ENCODE measurements at regions of chr10 and their contacts with region 1.

Region 1: DNA sequence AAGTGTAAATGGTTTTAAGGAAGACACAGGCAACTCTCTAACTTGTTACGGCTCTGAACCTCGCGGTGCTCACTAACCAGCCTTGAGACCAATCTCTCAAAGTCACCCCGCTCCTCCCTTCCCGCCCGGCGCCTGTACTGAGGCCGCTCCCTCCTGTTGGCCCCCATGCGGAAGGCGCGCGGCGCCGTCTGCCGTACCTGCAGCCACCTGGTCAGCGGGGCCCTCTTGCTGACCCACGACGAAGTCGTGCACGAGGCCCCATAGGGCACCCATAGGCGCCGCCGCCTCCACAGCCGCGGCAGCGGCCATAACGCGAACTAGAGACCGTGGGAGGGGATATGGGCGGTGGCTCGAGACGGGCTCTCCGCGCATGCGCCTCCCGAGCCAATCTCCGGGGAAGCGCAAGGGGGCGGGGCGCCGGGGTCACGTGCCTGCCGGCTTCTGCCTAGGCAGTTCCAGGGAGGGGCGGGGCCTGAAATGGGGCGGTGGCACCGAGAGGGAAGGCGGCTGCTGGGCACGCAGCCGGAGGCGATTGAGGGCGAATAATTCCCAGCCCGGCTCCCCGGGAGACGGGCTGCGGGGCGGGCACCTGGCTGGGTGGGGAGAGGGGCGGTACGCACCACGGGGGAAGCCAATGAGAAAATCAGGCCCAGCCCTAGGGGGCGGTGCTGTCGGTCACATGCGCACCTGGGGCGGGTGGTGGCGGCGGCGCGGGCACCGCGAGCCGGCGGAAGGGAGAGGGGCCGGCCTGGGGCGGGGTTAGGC is at the start of gene MMS19:
- DNase-seq: peak; percentile 99 to 100 (median 100)
- ATAC-seq: peak; percentile 90 to 96 (median 92)
- H3K4me3 ChIP-seq: peak within 1 kb of the TSS; percentile 71 to 99 (median 96)
- H3K27ac ChIP-seq: peak within 1 kb of the TSS; percentile 71 to 98 (median 94)
- H3K4me1 ChIP-seq: peaks cover 7 to 77% (median 47%) of the 10 kb centered on the region in 12 donors
- H3K27me3 ChIP-seq: no peaks in the 10 kb centered on the region
- CTCF ChIP-seq: peak in 5 of 12 donors; percentile 14 to 56 (median 21)
- POLR2A ChIP-seq: peak in 1 of 2 donors; percentile 68
- total RNA-seq, gene MMS19: 30.2 to 63.5 (median 48.1) TPM

Region 2: DNA sequence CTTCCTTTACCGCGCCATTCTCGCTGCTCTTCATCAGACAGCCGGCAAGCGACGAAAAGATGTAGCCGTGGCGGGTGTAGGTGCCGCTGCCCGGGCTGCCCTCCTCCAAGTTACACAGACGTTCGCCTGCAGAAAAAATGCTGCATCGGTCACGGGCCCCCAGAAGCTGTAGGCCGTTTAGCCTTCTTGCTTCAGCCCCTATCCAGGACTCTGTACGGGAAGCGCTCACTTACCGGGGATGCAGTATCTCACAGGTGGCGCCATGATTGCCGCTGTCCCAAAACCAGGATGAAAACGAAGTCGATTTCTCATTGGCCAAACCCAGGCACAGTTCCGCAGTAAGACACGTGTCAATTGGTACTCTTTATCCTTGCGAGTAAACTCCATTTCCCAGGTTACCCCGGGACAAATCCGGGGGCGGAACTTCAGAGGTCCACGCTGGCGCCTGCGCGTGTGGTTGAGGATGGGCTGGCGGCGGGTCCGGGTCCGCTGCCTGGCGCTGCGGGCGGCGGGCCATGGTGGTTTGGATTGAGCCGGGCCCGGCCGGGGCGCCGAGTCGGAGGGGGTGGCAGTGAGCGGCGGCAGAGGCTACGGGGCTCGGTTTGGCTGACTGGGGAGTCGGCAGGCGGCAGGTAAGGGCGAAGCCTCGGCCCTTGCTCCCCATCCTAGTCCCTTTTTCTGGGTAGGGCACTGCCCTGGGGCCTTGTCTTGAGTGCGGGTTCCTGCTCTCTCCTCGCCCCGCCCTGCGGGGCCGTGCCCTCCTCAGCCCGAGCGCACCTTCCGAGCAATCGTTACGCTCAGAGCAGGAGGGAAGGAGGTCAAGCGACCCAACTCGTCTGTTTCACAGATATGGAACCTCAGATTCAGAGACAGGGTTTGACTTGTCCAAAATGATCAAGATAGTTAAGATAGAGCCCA is 52.3 kb before region 1 on chr10 and contains the starts of genes EXOSC1 and ZDHHC16:
- intact Hi-C with region 1: loop called in 2 of 10 experiments (anchors 5 to 10 kb)
- DNase-seq: peak; percentile 92 to 94 (median 93)
- ATAC-seq: peak; percentile 97 to 98 (median 98)
- H3K4me3 ChIP-seq: peak within 1 kb of the TSS; percentile 62 to 96 (median 89)
- H3K27ac ChIP-seq: peak within 1 kb of the TSS; percentile 27 to 83 (median 72)
- H3K4me1 ChIP-seq: peaks cover 4 to 46% (median 35%) of the 10 kb centered on the region in 12 donors
- H3K27me3 ChIP-seq: no peaks in the 10 kb centered on the region
- CTCF ChIP-seq: peak in 4 of 12 donors; percentile 9 to 39 (median 24)
- POLR2A ChIP-seq: peak in 1 of 2 donors; percentile 81
- total RNA-seq, gene EXOSC1: 14.8 to 24.6 (median 16.9) TPM
- total RNA-seq, gene ZDHHC16: 16.2 to 36.8 (median 25.2) TPM

Region 3: GRCh38 chr10:97534746-97535367 is 36.6 kb after region 1 on chr10:
- intact Hi-C with region 1: loop called in 3 of 10 experiments (anchors 5 to 10 kb)
- DNase-seq: peak in 1 of 5 donors; percentile 22
- ATAC-seq: peak in 3 of 4 donors; percentile 30 to 45 (median 31)
- H3K4me3 ChIP-seq: no peak overlapping the region
- H3K27ac ChIP-seq: no peak overlapping the region
- H3K4me1 ChIP-seq: peaks cover 0 to 16% (median 8%) of the 10 kb centered on the region in 12 donors
- H3K27me3 ChIP-seq: no peaks in the 10 kb centered on the region
- CTCF ChIP-seq: peak in 9 of 12 donors; percentile 11 to 56 (median 48)
- POLR2A ChIP-seq: no peak

Region 4: DNA sequence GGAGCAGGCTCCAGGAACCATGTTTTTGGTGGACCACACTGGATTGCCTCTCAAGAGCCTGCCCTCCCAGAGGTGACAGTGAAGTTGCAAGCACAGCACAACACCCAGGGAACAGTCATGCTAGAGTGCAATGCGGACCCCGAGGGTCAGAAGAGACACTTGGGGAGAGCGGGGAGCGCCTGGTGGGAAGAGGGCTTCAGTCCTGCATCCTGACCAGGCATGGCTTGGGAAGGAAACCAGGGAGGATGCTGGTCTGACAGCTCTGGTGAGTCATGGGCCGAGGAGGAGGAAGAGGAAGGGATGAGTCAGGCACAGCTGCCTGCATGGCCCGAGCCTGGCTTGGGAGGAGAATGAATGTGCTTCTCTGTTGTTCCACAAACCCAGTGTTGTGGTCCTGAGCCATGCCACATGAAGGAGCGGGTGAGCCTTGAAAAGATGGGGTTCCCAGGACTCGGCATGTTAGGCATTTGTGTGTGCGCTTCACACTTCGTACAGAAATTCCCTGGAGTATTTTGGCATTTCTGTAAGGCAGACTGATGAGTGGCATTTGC is 44.8 kb after region 1 on chr10:
- intact Hi-C with region 1: loop called in 4 of 10 experiments (anchors 1 to 10 kb)
- DNase-seq: peak; percentile 83 to 94 (median 88)
- ATAC-seq: peak; percentile 78 to 92 (median 88)
- H3K4me3 ChIP-seq: no peak overlapping the region
- H3K27ac ChIP-seq: peak overlapping the region; percentile 77 to 97 (median 88)
- H3K4me1 ChIP-seq: peaks cover 0 to 75% (median 57%) of the 10 kb centered on the region in 12 donors
- H3K27me3 ChIP-seq: no peaks in the 10 kb centered on the region
- CTCF ChIP-seq: no peak
- POLR2A ChIP-seq: peak in 1 of 2 donors; percentile 31

Region 5: GRCh38 chr10:97553575-97554031 is 55.3 kb after region 1 on chr10:
- intact Hi-C with region 1: loop called in 6 of 10 experiments (anchors 5 to 10 kb)
- DNase-seq: peak; percentile 69 to 79 (median 72)
- ATAC-seq: peak; percentile 87 to 91 (median 91)
- H3K4me3 ChIP-seq: no peak overlapping the region
- H3K27ac ChIP-seq: no peak overlapping the region
- H3K4me1 ChIP-seq: peaks cover 0 to 42% (median 26%) of the 10 kb centered on the region in 12 donors
- H3K27me3 ChIP-seq: no peaks in the 10 kb centered on the region
- CTCF ChIP-seq: peak; percentile 61 to 89 (median 80)
- POLR2A ChIP-seq: no peak

Region 6: DNA sequence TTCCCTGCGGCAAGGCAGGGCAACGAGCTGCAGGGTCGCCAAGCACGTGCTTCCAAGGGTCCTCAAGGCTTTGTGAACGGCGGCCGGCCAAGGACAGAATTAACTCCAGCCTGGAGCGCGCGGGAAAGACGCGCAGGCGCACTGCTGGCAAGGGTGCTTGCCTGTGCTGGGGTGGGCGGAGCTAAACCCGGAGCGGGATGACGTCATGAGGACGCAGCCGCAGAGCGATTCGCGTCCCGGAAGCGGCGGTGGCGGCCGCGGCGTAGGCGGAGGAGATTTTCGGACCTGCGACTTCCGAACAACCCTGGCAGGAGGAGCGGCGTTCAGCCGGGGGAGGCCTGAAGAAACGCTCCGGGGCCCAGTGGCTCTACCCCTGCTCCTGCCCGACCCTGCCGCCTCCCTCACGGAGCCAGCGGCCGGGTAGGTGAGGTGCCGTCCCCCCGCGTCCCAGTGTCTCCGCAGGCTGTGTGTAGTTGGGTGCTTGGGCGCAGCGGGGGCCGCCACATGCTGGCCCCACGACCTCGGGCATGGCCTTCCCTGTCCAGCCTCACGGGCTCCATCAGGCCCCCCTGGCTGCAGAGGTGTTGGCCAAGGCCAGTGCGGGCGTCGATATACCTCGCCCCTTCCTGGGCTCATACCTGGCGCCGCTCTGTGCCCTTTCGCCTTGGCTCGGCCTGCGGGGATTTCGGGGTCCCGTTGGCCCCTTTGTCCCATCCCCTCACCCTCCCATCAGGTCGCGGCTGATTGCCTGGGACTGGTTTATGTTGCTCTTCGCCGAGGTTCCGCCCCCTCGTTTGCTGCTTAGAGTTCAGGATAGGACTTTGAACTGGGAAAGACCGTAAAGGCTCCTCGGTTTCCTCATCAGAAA is 238.9 kb after region 1 on chr10 and contains the start of gene ZFYVE27:
- intact Hi-C with region 1: loop called in 1 of 10 experiments (anchors 5 kb)
- DNase-seq: peak; percentile 97 to 99 (median 98)
- ATAC-seq: peak; percentile 96 to 98 (median 96)
- H3K4me3 ChIP-seq: peak within 1 kb of the TSS; percentile 75 to 100 (median 90)
- H3K27ac ChIP-seq: peak within 1 kb of the TSS; percentile 66 to 97 (median 92)
- H3K4me1 ChIP-seq: peaks cover 4 to 32% (median 18%) of the 10 kb centered on the region in 12 donors
- H3K27me3 ChIP-seq: no peaks in the 10 kb centered on the region
- CTCF ChIP-seq: no peak
- POLR2A ChIP-seq: peak; percentile 87 to 96
- total RNA-seq, gene ZFYVE27: 7.3 to 16.1 (median 13.1) TPM

Measured in heart left ventricle (tissue), 16 donors.